AG04449 (cell line): ENCODE measurements at regions of chr7 and their contacts with region 1.

Region 1: GRCh38 chr7:131859147-131859821 is 302.9 kb upstream of the PODXL start:
- DNase-seq: peak; percentile 26
- H3K4me3 ChIP-seq: no peak overlapping the region
- CTCF ChIP-seq: peak; percentile 94

Region 2: DNA sequence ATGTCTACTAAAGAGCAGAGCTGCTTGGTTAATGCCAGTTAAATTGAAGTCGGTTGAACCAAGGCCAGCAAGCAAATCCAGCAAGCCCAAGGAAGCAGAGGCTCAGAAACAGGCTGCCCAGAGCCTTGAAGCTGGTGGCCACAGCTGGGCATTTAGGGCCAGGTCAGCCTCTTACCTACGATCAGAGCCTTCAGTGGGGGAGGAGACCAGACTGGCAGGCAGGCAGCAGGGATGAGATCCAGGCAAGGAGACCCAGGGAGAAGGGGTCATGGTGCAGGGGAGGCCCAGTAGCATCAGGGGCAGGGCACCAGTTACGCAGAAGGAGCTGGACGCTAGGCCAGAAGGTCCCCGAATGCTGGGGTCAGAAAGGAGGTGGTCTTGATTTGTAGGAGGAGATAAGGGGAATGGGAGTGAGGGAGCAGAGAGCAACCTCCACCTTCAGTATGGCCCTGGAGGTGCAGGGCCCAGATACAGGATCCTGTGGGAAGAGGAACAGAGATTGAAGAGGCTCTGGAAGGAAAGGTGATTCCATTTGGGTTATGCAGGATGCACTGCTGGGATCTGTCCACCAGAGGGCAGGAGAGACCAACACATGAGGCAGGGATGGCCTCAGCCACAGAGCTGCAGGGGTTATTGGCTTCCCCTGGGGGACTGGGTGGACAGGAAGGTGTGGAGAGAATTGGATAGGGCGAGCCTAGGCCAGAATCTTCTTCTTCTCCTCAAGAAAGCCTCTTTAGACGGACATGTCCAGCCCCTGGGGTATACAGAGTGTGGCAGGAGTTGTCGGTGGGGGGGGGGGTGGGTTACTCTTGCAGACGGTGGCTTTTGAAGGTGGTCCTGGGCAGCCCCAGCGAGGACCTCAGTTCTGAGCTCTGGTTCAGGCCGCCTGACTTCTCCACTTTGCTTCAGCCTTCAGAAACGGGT is 170.3 kb before region 1 on chr7:
- CTCF ChIA-PET with region 1: interaction called, 29 read pairs
- POLR2A ChIA-PET with region 1: no interaction called
- DNase-seq: no peak
- H3K4me3 ChIP-seq: no peak overlapping the region
- CTCF ChIP-seq: peak; percentile 92

Region 3: GRCh38 chr7:131869169-131869844 is 10.0 kb after region 1 on chr7:
- CTCF ChIA-PET with region 1: interaction called, 52 read pairs
- POLR2A ChIA-PET with region 1: no interaction called
- DNase-seq: no peak
- H3K4me3 ChIP-seq: no peak overlapping the region
- CTCF ChIP-seq: no peak

Region 4: GRCh38 chr7:131919920-131920709 is 60.8 kb after region 1 on chr7:
- CTCF ChIA-PET with region 1: interaction called, 10 read pairs
- POLR2A ChIA-PET with region 1: no interaction called
- DNase-seq: no peak
- H3K4me3 ChIP-seq: no peak overlapping the region
- CTCF ChIP-seq: no peak

Region 5: DNA sequence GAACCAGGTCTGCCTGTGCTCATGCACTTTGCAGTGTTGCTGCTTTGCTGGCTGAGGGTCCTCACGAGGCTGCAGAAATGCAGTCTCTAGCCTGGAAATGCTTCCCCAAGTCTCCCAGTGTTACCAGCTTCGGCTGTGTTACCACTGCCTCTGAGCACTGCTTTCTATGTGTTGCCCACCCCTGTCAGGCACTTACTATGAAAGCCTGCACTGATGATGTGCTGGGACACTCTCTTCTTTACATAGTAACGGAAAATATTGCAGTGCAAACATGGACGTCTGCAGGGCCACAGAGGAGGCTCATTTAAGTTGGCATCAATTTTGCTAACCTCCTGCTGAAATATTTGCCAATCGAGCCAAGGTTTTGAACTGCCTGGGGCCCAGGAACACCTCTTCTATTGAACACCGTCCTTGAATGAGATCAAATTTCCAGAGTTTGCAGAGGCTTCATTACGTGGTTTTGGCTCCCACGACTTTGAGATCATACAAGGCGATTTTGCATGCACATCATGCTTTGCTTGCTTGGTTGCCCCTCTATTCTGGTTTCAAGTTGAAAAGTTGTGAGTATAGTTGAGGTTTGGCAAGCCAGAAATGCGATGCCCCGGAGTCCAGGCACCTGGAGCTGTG is 101.9 kb after region 1 on chr7:
- CTCF ChIA-PET with region 1: no interaction called
- POLR2A ChIA-PET with region 1: no interaction called
- DNase-seq: no peak
- H3K4me3 ChIP-seq: no peak overlapping the region
- CTCF ChIP-seq: no peak

Region 6: DNA sequence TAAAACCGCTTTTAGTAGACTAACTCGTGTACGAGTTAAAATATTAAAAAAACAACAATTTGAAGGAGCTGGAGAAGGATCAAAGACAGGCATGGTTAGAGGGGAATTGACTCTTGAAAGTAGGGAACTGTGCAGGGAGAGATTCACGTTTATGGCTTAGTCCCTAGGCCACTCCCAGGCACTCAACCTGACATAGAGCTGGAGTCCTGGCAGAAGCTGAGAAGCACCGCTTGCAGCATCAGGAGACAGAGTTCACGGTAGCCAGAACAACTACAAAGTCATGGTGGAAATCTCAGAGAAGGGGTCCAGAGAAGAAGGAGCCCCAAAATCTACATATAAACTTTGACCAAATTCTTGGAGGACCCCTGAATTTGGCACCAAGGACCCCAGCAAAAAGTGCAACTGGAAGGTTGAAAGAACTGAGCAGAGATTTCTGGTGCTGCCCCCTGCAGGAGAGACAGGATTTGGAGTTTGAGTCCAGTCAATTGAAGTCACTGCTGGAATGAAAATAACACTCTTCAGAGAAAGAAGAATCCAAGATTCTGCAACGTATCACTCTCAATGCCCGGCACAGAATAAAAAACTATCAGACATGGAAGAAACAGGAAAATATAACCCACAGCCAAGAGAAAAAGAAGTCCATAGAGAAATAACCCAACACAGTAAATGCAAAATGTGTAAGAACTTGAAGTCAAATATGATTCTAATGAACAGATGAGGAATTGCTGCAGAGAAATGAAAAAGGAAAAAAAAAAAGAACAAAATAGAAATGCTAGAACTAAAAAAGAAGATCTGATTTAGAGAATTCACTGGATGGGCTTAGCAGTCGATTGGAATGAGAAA is 190.4 kb after region 1 on chr7:
- CTCF ChIA-PET with region 1: interaction called, 28 read pairs
- POLR2A ChIA-PET with region 1: no interaction called
- DNase-seq: no peak
- H3K4me3 ChIP-seq: no peak overlapping the region
- CTCF ChIP-seq: peak; percentile 52

Region 7: GRCh38 chr7:132243463-132243862 is 384.2 kb after region 1 on chr7:
- CTCF ChIA-PET with region 1: interaction called, 82 read pairs
- POLR2A ChIA-PET with region 1: no interaction called
- DNase-seq: peak; percentile 4
- H3K4me3 ChIP-seq: no peak overlapping the region
- CTCF ChIP-seq: no peak

Region 8: GRCh38 chr7:132568962-132569361 is 709.7 kb after region 1 on chr7:
- CTCF ChIA-PET with region 1: interaction called, 15 read pairs
- POLR2A ChIA-PET with region 1: no interaction called
- DNase-seq: no peak
- H3K4me3 ChIP-seq: no peak overlapping the region
- CTCF ChIP-seq: no peak

Region 9: GRCh38 chr7:132789281-132789680 is 930.0 kb after region 1 on chr7:
- CTCF ChIA-PET with region 1: no interaction called
- POLR2A ChIA-PET with region 1: no interaction called
- DNase-seq: no peak
- H3K4me3 ChIP-seq: no peak overlapping the region
- CTCF ChIP-seq: no peak